Activated CD4-positive, alpha-beta memory T cell treated with anti-CD3 and anti-CD28 coated beads for 36 hours (primary cell): ENCODE measurements at regions of chr12 and their contacts with region 1.

Region 1: GRCh38 chr12:47391566-47391965 is 311.8 kb upstream of the AMIGO2 start:
- DNase-seq: peak; percentile 86
- H3K4me3 Mint-ChIP-seq: peak overlapping the region; percentile 71
- H3K27ac Mint-ChIP-seq: peak overlapping the region; percentile 100
- H3K4me1 Mint-ChIP-seq: peaks cover 85% of the 10 kb centered on the region
- H3K27me3 Mint-ChIP-seq: no peaks in the 10 kb centered on the region

Region 2: GRCh38 chr12:47111392-47111778 is 280.2 kb before region 1 on chr12:
- CTCF ChIA-PET with region 1: no interaction called
- POLR2A ChIA-PET with region 1: no interaction called
- intact Hi-C with region 1: loop called (anchors 2 kb)
- DNase-seq: peak; percentile 56
- H3K4me3 Mint-ChIP-seq: no peak overlapping the region
- H3K27ac Mint-ChIP-seq: no peak overlapping the region
- H3K4me1 Mint-ChIP-seq: peaks cover 38% of the 10 kb centered on the region
- H3K27me3 Mint-ChIP-seq: no peaks in the 10 kb centered on the region

Region 3: GRCh38 chr12:47328831-47329545 is 62.6 kb before region 1 on chr12:
- CTCF ChIA-PET with region 1: no interaction called
- POLR2A ChIA-PET with region 1: no interaction called
- intact Hi-C with region 1: no loop called
- DNase-seq: peak; percentile 36
- H3K4me3 Mint-ChIP-seq: no peak overlapping the region
- H3K27ac Mint-ChIP-seq: peak overlapping the region; percentile 67
- H3K4me1 Mint-ChIP-seq: peaks cover 28% of the 10 kb centered on the region
- H3K27me3 Mint-ChIP-seq: no peaks in the 10 kb centered on the region

Region 4: GRCh38 chr12:47350062-47350408 is 41.5 kb before region 1 on chr12:
- CTCF ChIA-PET with region 1: no interaction called
- POLR2A ChIA-PET with region 1: interaction called, 28 read pairs
- intact Hi-C with region 1: loop called (anchors 1 kb)
- DNase-seq: no peak
- H3K4me3 Mint-ChIP-seq: peak overlapping the region; percentile 58
- H3K27ac Mint-ChIP-seq: peak overlapping the region; percentile 100
- H3K4me1 Mint-ChIP-seq: peaks cover 69% of the 10 kb centered on the region
- H3K27me3 Mint-ChIP-seq: no peaks in the 10 kb centered on the region

Region 5: DNA sequence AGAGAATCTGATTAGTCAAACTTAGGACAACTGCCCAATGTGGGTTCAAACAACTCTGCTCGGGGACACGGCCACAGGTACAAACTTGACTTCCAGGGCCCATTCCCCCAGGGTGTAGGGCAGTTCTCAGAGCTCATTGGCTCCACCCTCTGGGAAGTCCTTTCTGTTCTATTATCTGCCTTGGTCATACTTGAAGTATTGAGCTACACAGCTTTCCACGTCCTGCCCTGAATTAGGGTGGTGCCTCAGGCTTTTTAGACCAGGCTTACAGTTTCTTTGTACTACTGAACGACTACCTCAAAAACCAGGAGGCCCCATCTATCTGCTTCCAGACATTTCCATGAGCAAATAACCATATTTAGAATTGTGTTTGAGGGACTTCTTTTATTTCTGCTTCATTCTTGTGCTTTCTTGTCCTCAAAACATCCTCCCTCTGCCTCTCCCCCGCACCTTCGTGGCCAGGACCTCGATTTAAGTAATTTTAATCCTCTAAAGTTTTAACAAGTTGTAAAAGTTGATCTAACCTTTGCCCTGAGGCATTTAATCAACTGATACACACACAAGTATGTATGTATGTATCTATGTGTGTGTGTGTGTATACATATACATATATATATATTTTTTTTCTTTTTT is 30.1 kb before region 1 on chr12:
- CTCF ChIA-PET with region 1: interaction called, 56 read pairs
- POLR2A ChIA-PET with region 1: interaction called, 36 read pairs
- intact Hi-C with region 1: loop called (anchors 1 kb)
- DNase-seq: peak; percentile 73
- H3K4me3 Mint-ChIP-seq: peak overlapping the region; percentile 66
- H3K27ac Mint-ChIP-seq: peak overlapping the region; percentile 99
- H3K4me1 Mint-ChIP-seq: peaks cover 60% of the 10 kb centered on the region
- H3K27me3 Mint-ChIP-seq: no peaks in the 10 kb centered on the region

Region 6: DNA sequence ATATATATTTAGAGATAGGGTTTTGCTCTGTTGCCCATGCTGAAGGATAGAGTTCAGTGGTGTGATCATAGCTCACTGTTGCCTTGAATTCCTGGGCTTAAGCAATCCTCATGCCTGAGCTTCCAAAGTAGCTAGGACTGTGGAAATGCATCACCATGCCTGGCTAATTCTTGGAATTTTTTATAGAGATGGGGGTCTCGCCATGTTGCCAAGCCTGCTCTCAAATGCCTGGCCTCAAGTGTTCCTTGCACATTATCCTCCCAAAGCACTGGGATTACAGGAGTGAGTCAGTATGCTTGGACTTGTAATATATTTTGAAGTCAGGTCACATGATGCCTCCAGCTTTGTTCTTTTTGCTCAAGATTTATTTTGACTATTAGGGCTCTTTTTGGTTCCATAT is 136.2 kb after region 1 on chr12:
- CTCF ChIA-PET with region 1: no interaction called
- POLR2A ChIA-PET with region 1: no interaction called
- intact Hi-C with region 1: no loop called
- DNase-seq: no peak
- H3K4me3 Mint-ChIP-seq: no peak overlapping the region
- H3K27ac Mint-ChIP-seq: no peak overlapping the region
- H3K4me1 Mint-ChIP-seq: no peaks in the 10 kb centered on the region
- H3K27me3 Mint-ChIP-seq: peaks cover 9% of the 10 kb centered on the region

Region 7: DNA sequence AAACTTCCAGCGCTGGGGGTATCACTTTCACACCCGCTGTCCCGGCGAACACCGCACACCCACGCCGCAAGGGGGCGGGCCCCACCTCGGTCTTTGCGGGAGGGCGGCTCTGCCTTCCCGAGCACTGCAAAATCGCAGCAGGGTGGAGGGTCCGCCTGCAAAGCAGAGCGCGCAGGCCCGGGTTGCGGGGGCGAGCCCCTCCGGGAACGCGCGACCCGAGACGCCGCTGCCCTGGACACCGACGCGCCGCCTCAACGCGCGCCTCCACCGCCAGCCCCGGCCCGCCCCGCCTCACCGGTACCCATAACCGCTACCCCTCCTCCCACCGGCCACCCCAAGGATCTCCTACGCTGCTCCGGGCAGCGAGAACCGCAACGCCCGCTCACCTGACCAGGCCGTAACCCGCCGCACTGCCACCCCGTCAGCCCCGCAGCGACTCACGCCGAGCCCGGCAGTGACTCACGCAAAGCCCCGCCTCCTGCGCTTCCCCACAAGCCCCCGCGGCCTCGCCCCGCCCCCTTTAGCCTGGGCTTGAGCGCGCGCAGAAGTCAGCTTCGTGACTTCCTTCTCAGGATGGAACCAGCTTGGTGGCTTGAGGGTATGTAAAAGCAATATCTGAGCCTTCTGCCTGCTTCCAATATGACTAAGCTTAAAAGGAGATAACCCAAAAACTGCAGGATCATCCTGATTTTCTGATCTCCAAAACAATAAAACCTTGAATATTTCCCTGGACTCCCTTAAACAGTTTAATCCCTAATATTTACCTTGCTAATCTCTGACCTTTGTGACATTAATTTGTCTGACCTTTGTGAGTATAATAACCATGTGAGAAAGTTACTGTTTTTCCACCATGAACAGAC is 314.2 kb after region 1 on chr12 and contains the start of gene RPAP3:
- CTCF ChIA-PET with region 1: no interaction called
- POLR2A ChIA-PET with region 1: no interaction called
- intact Hi-C with region 1: loop called (anchors 5 kb)
- DNase-seq: peak; percentile 99
- H3K4me3 Mint-ChIP-seq: peak within 1 kb of the TSS; percentile 96
- H3K27ac Mint-ChIP-seq: peak within 1 kb of the TSS; percentile 95
- H3K4me1 Mint-ChIP-seq: peaks cover 50% of the 10 kb centered on the region
- H3K27me3 Mint-ChIP-seq: no peaks in the 10 kb centered on the region
- total RNA-seq, gene RPAP3: 49.4 to 50.2 TPM